Activated T-helper 1 cell treated with anti-CD3 and anti-CD28 coated beads, Interleukin-12 subunit alpha, Interleukin-12 subunit beta, Interleukin-2, Interleukin-4 antibody, amounts not matched to agents 30 ng/mL and 10 ng/mL and 1 ng/mL, durations not matched to agents 14 hours and 24 hours and 36 hours (primary cell): ENCODE measurements at regions of chr10 and their contacts with region 1.

Region 1: GRCh38 chr10:22003079-22003913 is at the start of gene DNAJC1:
- DNase-seq: peak; percentile 97
- H3K4me3 Mint-ChIP-seq: peak within 1 kb of the TSS; percentile 98
- H3K27ac Mint-ChIP-seq: peak within 1 kb of the TSS; percentile 96
- H3K4me1 Mint-ChIP-seq: peaks cover 41% of the 10 kb centered on the region
- H3K27me3 Mint-ChIP-seq: peaks cover 14% of the 10 kb centered on the region
- total RNA-seq, gene DNAJC1: 24.8 and 26.2 TPM in 2 replicates

Region 2: GRCh38 chr10:21771219-21771618 is 232.1 kb before region 1 on chr10:
- intact Hi-C with region 1: no loop called
- DNase-seq: no peak
- H3K4me3 Mint-ChIP-seq: no peak overlapping the region
- H3K27ac Mint-ChIP-seq: no peak overlapping the region
- H3K4me1 Mint-ChIP-seq: no peaks in the 10 kb centered on the region
- H3K27me3 Mint-ChIP-seq: no peaks in the 10 kb centered on the region

Region 3: DNA sequence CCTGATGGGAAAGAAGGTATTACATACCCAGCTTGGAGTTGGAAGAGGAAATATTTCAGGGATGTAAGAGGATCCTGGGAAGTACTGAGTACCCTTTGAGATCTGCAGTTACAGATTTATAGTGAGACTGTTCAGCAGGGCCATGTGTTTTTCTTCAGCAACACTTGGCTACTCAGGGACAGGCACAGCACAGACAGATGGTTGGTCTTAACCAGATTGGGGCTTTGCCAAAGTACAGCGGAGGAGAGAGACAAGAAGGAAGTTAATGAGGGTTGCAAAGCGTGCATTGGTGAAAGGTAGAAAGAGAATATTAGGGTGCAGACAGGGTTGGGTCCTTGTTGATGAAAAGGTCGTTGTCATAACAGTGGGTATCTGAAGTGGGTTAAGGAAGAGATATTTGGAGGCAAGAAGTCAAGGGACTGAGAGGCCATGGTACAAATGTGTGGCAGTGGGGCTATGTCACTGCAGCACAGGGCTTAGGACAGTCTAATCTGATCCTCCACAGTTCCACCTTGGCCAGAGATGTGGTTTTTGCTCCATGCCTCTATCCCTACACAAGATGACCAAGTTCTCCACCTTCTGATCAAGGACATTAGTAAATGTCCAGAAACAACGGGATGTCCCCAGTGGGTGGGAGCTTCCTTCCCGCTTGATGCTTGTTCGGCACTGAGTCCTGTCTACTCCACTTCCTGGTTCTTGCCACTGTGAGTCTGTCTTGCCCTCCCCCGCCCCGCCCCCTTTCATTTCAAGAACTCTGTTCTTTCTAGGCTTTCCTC is 19.1 kb after region 1 on chr10:
- intact Hi-C with region 1: loop called (anchors 1 kb)
- DNase-seq: peak; percentile 9
- H3K4me3 Mint-ChIP-seq: peak overlapping the region; percentile 59
- H3K27ac Mint-ChIP-seq: peak overlapping the region; percentile 77
- H3K4me1 Mint-ChIP-seq: peaks cover 18% of the 10 kb centered on the region
- H3K27me3 Mint-ChIP-seq: peaks cover 1% of the 10 kb centered on the region

Region 4: DNA sequence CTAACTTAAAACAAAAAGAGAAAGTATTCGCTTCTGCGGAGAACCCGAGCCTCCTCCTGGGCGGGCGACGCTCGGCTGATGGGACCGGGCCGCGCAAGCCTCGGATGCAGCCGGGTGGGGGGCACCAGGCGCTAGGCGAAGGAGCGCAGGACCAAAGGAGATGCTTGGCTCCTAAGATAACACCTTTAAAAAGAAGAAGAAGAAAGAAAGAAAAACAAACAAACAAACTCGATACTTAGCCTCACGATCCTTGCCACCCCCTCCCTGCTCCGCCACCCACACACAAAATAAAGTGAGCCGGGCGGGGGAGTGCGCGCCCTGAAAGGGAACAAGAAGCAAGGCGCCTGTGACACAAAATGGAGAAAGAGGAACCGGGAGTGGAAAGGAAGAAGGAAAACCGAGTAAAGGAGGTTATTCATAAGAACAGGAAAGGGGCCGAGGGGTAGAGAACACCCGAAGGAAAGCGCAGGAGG is 248.5 kb after region 1 on chr10:
- intact Hi-C with region 1: loop called (anchors 1 kb)
- DNase-seq: peak; percentile 58
- H3K4me3 Mint-ChIP-seq: peak overlapping the region; percentile 88
- H3K27ac Mint-ChIP-seq: peak overlapping the region; percentile 98
- H3K4me1 Mint-ChIP-seq: peaks cover 44% of the 10 kb centered on the region
- H3K27me3 Mint-ChIP-seq: peaks cover 18% of the 10 kb centered on the region

Region 5: GRCh38 chr10:22340362-22341189 is 337.3 kb after region 1 on chr10:
- intact Hi-C with region 1: loop called (anchors 1 kb)
- DNase-seq: peak; percentile 67
- H3K4me3 Mint-ChIP-seq: peak overlapping the region; percentile 86
- H3K27ac Mint-ChIP-seq: peak overlapping the region; percentile 96
- H3K4me1 Mint-ChIP-seq: peaks cover 47% of the 10 kb centered on the region
- H3K27me3 Mint-ChIP-seq: peaks cover 76% of the 10 kb centered on the region

Region 6: GRCh38 chr10:22630234-22631174 is 627.2 kb after region 1 on chr10:
- intact Hi-C with region 1: loop called (anchors 1 kb)
- DNase-seq: no peak
- H3K4me3 Mint-ChIP-seq: peak overlapping the region; percentile 74
- H3K27ac Mint-ChIP-seq: peak overlapping the region; percentile 100
- H3K4me1 Mint-ChIP-seq: peaks cover 94% of the 10 kb centered on the region
- H3K27me3 Mint-ChIP-seq: no peaks in the 10 kb centered on the region

Region 7: GRCh38 chr10:23095404-23095965 is 1092.2 kb after region 1 on chr10 and contains the start of gene MSRB2:
- intact Hi-C with region 1: loop called (anchors 2 kb)
- DNase-seq: peak; percentile 64
- H3K4me3 Mint-ChIP-seq: peak within 1 kb of the TSS; percentile 92
- H3K27ac Mint-ChIP-seq: peak within 1 kb of the TSS; percentile 91
- H3K4me1 Mint-ChIP-seq: peaks cover 36% of the 10 kb centered on the region
- H3K27me3 Mint-ChIP-seq: peaks cover 6% of the 10 kb centered on the region
- total RNA-seq, gene MSRB2: 3.0 and 4.0 TPM in 2 replicates